ENCODE measurements at regions of chr3 and their contacts with region 1.

Region 1: DNA sequence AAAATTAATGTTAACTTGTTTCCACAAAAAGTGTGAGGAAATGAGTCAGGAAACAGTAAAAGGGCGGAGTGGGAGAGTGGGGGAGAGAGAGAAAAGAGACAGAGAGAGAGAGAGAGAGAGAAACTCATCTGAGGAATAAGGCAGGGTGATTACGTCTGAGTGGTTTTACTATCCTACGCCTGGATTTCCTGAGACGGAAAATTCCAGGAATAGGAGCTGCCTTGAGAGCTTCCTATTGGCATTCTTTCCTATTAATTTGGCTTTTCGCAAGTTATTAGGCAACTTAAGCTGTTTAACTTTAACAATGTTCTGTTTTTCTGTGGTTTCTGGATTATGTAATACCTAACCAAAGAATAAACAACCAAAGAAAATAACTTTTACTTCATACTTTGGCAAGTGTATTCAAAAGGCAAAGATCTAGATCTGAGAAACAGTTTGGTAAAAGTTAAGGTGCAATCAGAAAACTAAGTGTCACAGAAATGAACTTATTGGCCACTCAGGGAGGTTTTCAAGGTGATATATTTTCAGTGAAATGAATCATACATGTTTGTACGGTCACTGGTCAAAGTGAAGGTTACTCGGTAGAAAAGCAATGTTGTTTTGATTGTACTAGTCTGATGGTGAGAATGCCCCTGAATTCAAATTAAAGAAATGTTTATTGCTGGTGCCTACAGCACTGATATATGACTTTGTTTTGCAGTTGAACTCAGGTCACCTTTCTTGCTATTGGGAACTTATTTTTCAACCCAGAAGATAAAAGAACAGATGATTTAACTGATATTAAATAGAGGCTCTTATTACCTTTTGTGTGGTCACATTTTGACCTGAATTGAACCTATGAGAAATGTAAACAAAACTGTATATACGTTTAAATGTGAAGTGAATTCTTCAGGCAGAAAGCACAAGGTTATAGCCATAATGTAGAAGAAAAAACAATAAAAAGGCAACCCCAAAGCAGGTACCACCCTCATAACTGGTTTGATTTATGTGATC is 39.9 kb upstream of the TNFSF10 start:
- DNase-seq: peak; percentile 79
- H3K4me3 Mint-ChIP-seq: peak overlapping the region; percentile 65
- H3K27ac Mint-ChIP-seq: peak overlapping the region; percentile 85
- H3K4me1 Mint-ChIP-seq: peaks cover 42% of the 10 kb centered on the region
- H3K27me3 Mint-ChIP-seq: no peaks in the 10 kb centered on the region

Region 2: GRCh38 chr3:172517859-172518466 is 45.2 kb before region 1 on chr3:
- intact Hi-C with region 1: loop called (anchors 1 kb)
- DNase-seq: peak; percentile 89
- H3K4me3 Mint-ChIP-seq: peak overlapping the region; percentile 87
- H3K27ac Mint-ChIP-seq: peak overlapping the region; percentile 98
- H3K4me1 Mint-ChIP-seq: peaks cover 66% of the 10 kb centered on the region
- H3K27me3 Mint-ChIP-seq: no peaks in the 10 kb centered on the region

Region 3: GRCh38 chr3:172522871-172523818 is 40.0 kb before region 1 on chr3 and contains the start of gene TNFSF10:
- intact Hi-C with region 1: loop called (anchors 1 kb)
- DNase-seq: peak; percentile 94
- H3K4me3 Mint-ChIP-seq: peak within 1 kb of the TSS; percentile 87
- H3K27ac Mint-ChIP-seq: peak within 1 kb of the TSS; percentile 94
- H3K4me1 Mint-ChIP-seq: peaks cover 43% of the 10 kb centered on the region
- H3K27me3 Mint-ChIP-seq: no peaks in the 10 kb centered on the region
- total RNA-seq, gene TNFSF10: 71.5 and 77.5 TPM in 2 replicates

Region 4: GRCh38 chr3:172530566-172530965 is 32.6 kb before region 1 on chr3:
- intact Hi-C with region 1: loop called (anchors 1 kb)
- DNase-seq: peak; percentile 85
- H3K4me3 Mint-ChIP-seq: peak overlapping the region; percentile 76
- H3K27ac Mint-ChIP-seq: peak overlapping the region; percentile 97
- H3K4me1 Mint-ChIP-seq: peaks cover 49% of the 10 kb centered on the region
- H3K27me3 Mint-ChIP-seq: no peaks in the 10 kb centered on the region

Region 5: DNA sequence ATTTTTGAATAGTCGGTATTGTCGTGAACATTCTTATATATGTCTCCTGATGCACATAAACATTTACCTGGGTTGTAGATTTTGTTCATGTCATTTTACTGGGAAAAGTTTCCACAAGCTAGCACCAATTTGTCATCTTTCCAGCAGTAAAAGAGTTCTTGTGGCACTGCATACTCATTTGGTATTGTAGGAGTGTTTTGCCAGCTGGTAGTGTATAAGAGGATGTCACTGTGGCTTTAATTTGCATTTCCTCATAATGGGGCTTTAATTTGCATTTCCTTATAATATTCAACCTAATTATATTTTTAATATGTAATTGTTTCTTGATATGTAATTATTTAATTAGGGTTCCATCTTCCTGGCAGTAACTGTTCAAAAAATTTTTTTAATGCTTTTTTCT is 18.8 kb before region 1 on chr3:
- intact Hi-C with region 1: loop called (anchors 2 kb)
- DNase-seq: no peak
- H3K4me3 Mint-ChIP-seq: no peak overlapping the region
- H3K27ac Mint-ChIP-seq: peak overlapping the region; percentile 56
- H3K4me1 Mint-ChIP-seq: peaks cover 40% of the 10 kb centered on the region
- H3K27me3 Mint-ChIP-seq: no peaks in the 10 kb centered on the region

Region 6: DNA sequence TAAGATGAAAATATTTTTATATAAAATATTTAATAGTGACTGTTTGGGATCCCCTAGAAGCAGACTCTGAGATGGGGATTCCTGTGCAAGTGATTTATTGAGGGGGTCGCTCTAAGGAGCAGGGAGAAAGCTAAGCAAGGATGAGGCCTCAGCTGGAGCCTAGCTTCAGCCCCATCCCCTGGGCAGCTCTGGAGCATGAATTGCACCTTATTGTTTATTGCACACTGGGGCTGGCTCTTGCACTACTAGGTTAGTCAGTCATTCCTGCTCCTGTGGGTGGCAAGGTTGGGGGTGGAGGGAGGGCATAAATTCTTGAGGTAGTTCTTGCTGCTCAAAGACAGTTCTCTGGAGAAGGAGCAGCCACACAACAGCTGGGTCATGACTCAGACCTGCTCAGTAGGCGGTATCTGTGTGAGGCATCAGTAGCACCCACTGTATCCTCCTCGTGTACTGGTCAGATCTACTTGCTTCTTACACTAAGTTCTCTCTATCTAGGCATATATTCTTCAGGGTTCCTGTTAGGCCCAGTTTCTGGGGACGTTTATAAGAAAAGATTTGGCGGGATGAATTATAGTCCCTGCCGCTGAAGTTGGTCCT is 12.7 kb before region 1 on chr3:
- intact Hi-C with region 1: loop called (anchors 1 kb)
- DNase-seq: peak; percentile 87
- H3K4me3 Mint-ChIP-seq: peak overlapping the region; percentile 37
- H3K27ac Mint-ChIP-seq: peak overlapping the region; percentile 82
- H3K4me1 Mint-ChIP-seq: peaks cover 58% of the 10 kb centered on the region
- H3K27me3 Mint-ChIP-seq: no peaks in the 10 kb centered on the region

Region 7: GRCh38 chr3:172580680-172581401 is 17.7 kb after region 1 on chr3:
- intact Hi-C with region 1: loop called (anchors 1 kb)
- DNase-seq: peak; percentile 67
- H3K4me3 Mint-ChIP-seq: peak overlapping the region; percentile 74
- H3K27ac Mint-ChIP-seq: peak overlapping the region; percentile 91
- H3K4me1 Mint-ChIP-seq: peaks cover 91% of the 10 kb centered on the region
- H3K27me3 Mint-ChIP-seq: no peaks in the 10 kb centered on the region

Measured in activated CD4-positive, alpha-beta T cell treated with anti-CD3 and anti-CD28 coated beads, Interleukin-2, amount 10 ng/mL, durations not matched to agents 24 days and 14 days (primary cell).